ENCODE measurements at regions of chr3 and their contacts with region 1.

Region 1: GRCh38 chr3:131273401-131273800 is 108.2 kb upstream of the NUDT16 start:
- DNase-seq: no peak
- H3K4me3 ChIP-seq: no peak overlapping the region
- H3K27ac ChIP-seq: no peak overlapping the region
- H3K4me1 ChIP-seq: no peaks in the 10 kb centered on the region
- CTCF ChIP-seq: no peak

Region 2: GRCh38 chr3:131091768-131092167 is 181.6 kb before region 1 on chr3:
- CTCF ChIA-PET with region 1: no interaction called
- POLR2A ChIA-PET with region 1: no interaction called
- intact Hi-C with region 1: no loop called
- DNase-seq: no peak
- H3K4me3 ChIP-seq: no peak overlapping the region
- H3K27ac ChIP-seq: no peak overlapping the region
- H3K4me1 ChIP-seq: no peaks in the 10 kb centered on the region
- CTCF ChIP-seq: no peak

Region 3: GRCh38 chr3:131283862-131284261 is 10.5 kb after region 1 on chr3:
- CTCF ChIA-PET with region 1: no interaction called
- POLR2A ChIA-PET with region 1: interaction called, 10 read pairs
- intact Hi-C with region 1: no loop called
- DNase-seq: no peak
- H3K4me3 ChIP-seq: no peak overlapping the region
- H3K27ac ChIP-seq: no peak overlapping the region
- H3K4me1 ChIP-seq: no peaks in the 10 kb centered on the region
- CTCF ChIP-seq: no peak

Region 4: DNA sequence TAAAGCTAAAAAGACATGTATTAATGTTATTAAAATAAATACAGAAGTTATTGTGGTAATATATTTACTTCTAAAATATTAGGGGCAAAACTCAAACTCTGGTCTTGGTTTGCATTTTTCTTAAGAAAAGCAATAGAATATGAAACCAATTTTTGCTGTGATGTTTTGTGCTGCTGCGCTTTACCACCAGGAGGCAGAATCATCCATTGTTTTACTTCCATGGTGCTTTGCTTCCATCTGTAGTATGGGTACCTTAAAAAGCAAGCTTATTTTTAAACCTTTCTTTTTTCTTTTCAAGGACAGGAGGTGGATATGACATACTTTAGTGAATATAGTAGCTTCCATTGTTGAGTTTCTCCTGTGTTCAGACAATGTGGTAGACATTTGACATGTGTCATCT is 275.9 kb after region 1 on chr3:
- CTCF ChIA-PET with region 1: no interaction called
- POLR2A ChIA-PET with region 1: no interaction called
- intact Hi-C with region 1: no loop called
- DNase-seq: no peak
- H3K4me3 ChIP-seq: no peak overlapping the region
- H3K27ac ChIP-seq: no peak overlapping the region
- H3K4me1 ChIP-seq: no peaks in the 10 kb centered on the region
- CTCF ChIP-seq: peak; percentile 71

Region 5: GRCh38 chr3:131591394-131592014 is 318.1 kb after region 1 on chr3:
- CTCF ChIA-PET with region 1: no interaction called
- POLR2A ChIA-PET with region 1: no interaction called
- intact Hi-C with region 1: no loop called
- DNase-seq: no peak
- H3K4me3 ChIP-seq: no peak overlapping the region
- H3K27ac ChIP-seq: no peak overlapping the region
- H3K4me1 ChIP-seq: no peaks in the 10 kb centered on the region
- CTCF ChIP-seq: no peak